Breast epithelium (tissue), 4 donors: ENCODE measurements at regions of chr2 and their contacts with region 1.

Region 1: GRCh38 chr2:110755491-110756078 is 23.2 kb downstream of the ACOXL start:
- DNase-seq: no peak
- H3K4me3 ChIP-seq: no peak overlapping the region
- H3K27ac ChIP-seq: no peak overlapping the region
- H3K4me1 ChIP-seq: no peaks in the 10 kb centered on the region
- H3K27me3 ChIP-seq: peaks cover 0 to 3% of the 10 kb centered on the region in 2 donors
- CTCF ChIP-seq: peak in 2 of 3 donors; percentile 35 to 48
- POLR2A ChIP-seq: no peak

Region 2: GRCh38 chr2:109185821-109186570 is 1569.6 kb before region 1 on chr2:
- intact Hi-C with region 1: loop called (anchors 10 kb)
- DNase-seq: peak in 1 of 2 donors; percentile 78
- H3K4me3 ChIP-seq: no peak overlapping the region
- H3K27ac ChIP-seq: peak overlapping the region; percentile 80 to 85
- H3K4me1 ChIP-seq: peaks cover 0 to 3% of the 10 kb centered on the region in 2 donors
- H3K27me3 ChIP-seq: no peaks in the 10 kb centered on the region
- CTCF ChIP-seq: no peak
- POLR2A ChIP-seq: no peak

Region 3: DNA sequence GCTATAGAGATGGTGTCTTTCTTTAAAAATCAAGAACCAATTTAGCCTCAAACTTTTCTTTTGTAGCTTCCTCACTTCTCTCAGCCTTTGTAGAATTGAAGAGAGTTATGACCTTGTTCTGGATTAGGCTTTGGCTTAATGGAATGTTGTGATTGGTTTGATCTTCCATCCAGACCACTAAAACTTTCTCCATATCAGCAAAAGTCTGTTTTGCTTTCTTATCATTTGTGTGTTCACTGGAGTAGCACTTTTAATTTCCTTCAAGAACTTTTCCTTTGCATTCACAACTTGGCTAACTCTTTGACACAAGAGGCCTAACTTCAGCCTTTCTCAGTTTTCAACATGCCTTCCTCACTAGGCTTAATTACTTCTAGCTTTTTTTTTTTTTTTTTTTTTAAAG is 169.9 kb after region 1 on chr2:
- intact Hi-C with region 1: no loop called
- DNase-seq: no peak
- H3K4me3 ChIP-seq: no peak overlapping the region
- H3K27ac ChIP-seq: no peak overlapping the region
- H3K4me1 ChIP-seq: no peaks in the 10 kb centered on the region
- H3K27me3 ChIP-seq: no peaks in the 10 kb centered on the region
- CTCF ChIP-seq: no peak
- POLR2A ChIP-seq: no peak